Colonic mucosa (tissue), 4 donors: ENCODE measurements at regions of chr1 and their contacts with region 1.

Region 1: GRCh38 chr1:156728597-156729462 is at the start of gene ISG20L2:
- DNase-seq: peak; percentile 96
- H3K4me3 ChIP-seq: peak within 1 kb of the TSS; percentile 89
- H3K27ac ChIP-seq: peak within 1 kb of the TSS; percentile 91
- H3K4me1 ChIP-seq: peaks cover 28% of the 10 kb centered on the region
- H3K27me3 ChIP-seq: no peaks in the 10 kb centered on the region
- CTCF ChIP-seq: no peak
- total RNA-seq, gene ISG20L2: 23.4 to 30.0 TPM

Region 2: GRCh38 chr1:156625436-156626078 is 103.3 kb before region 1 on chr1:
- intact Hi-C with region 1: no loop called
- DNase-seq: peak; percentile 64
- H3K4me3 ChIP-seq: peak overlapping the region; percentile 23
- H3K27ac ChIP-seq: no peak overlapping the region
- H3K4me1 ChIP-seq: peaks cover 21% of the 10 kb centered on the region
- H3K27me3 ChIP-seq: peaks cover 38% of the 10 kb centered on the region
- CTCF ChIP-seq: peak; percentile 65

Region 3: DNA sequence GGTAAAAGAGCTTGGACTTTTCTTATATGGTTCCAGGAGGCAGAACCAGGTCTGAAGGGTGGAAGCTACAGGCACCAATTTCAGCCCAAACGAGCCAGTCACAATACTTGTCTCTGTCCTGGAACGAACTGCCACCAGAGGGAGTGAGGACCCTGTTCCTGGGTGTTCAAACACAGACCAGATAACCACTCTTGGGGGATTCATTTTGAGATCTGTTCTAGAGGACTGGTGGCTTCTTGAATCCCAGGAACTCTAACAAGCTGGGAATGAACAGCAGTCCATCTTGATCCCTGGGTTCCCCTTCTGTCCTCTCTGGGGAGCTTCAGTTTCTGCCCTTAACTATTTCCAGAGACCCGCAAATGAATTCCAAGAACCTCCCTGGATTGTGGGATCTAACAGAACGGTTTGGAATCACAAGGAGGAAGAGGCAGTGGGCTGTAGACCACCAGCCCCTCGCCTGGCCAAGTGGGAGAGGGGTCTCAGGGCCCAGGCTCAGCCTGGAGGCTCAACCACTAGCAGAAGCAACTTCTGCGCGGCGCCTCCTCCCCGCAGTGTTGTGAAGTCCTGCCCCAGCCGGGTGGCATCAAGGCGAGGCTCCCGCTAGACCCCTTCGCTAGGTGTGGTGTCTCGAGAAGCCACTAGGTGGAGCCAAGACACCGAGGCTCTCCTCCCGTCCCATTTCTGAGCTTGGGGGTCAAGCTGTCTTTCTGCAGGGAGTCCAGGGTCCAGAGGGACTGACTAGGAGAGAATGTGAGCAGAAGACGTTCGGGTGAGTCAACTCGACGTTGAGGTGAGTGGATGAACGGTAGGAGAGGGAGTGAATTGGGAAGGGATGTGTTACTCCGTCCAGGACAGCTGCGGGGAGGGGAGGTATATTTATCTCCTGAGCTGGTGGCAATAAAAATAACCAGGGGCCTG is 39.5 kb before region 1 on chr1:
- intact Hi-C with region 1: loop called (anchors 2 kb)
- DNase-seq: peak; percentile 72
- H3K4me3 ChIP-seq: no peak overlapping the region
- H3K27ac ChIP-seq: no peak overlapping the region
- H3K4me1 ChIP-seq: peaks cover 7% of the 10 kb centered on the region
- H3K27me3 ChIP-seq: no peaks in the 10 kb centered on the region
- CTCF ChIP-seq: peak; percentile 86

Region 4: GRCh38 chr1:156767101-156767878 is 38.5 kb after region 1 on chr1 and contains the start of gene PRCC:
- intact Hi-C with region 1: loop called (anchors 5 kb)
- DNase-seq: peak; percentile 98
- H3K4me3 ChIP-seq: peak within 1 kb of the TSS; percentile 93
- H3K27ac ChIP-seq: peak within 1 kb of the TSS; percentile 82
- H3K4me1 ChIP-seq: peaks cover 12% of the 10 kb centered on the region
- H3K27me3 ChIP-seq: no peaks in the 10 kb centered on the region
- CTCF ChIP-seq: no peak
- total RNA-seq, gene PRCC: 57.1 to 58.7 TPM